CD4-positive, alpha-beta memory T cell (primary cell): ENCODE measurements at regions of chr12 and their contacts with region 1.

Region 1: DNA sequence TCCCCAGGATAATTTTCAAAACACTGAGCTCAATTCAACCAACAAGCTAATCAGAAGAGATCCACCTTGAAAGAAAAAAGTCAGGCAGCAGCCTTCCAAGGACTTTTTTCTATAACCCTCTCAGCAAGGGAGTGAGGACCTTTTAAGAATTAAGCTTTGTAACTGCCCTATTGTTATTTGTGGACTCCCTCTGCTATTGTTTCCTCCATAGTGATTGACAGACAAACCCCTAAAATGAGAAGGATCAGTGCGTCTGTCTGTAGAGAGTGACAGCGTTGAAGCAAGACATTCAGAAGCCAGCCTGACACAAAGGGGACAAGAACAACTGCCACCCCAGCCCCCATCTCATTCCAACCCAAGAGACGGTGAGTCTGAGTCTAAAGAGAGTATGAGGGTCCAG is 30.3 kb upstream of the BTG1 start:
- DNase-seq: no peak
- H3K4me3 ChIP-seq: no peak overlapping the region
- H3K4me3 Mint-ChIP-seq: no peak overlapping the region
- H3K27ac ChIP-seq: no peak overlapping the region
- H3K27ac Mint-ChIP-seq: no peak overlapping the region
- H3K4me1 ChIP-seq: peaks cover 12% of the 10 kb centered on the region
- H3K4me1 Mint-ChIP-seq: peaks cover 1 to 23% (median 15%) of the 10 kb centered on the region in 4 donors
- H3K27me3 ChIP-seq: no peaks in the 10 kb centered on the region
- H3K27me3 Mint-ChIP-seq: no peaks in the 10 kb centered on the region

Region 2: DNA sequence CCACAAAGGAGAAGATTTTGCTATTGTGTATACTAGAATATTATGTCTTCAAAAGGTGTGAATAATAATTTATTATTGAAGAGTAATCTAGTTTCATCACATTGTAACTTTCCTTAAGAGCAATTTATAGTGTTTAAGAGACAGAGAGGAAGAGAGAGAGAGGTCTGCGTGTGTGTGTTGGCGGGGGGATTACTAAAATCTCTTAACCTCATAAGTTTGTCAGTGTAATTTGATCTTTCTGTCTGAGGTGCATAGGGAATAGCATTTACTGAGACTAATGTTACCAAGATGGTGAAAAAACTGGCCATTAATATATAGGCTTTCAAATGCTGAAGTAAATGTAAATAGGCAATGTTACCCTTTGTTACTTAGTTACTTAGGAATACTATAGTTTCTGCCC is 17.9 kb after region 1 on chr12:
- CTCF ChIA-PET with region 1: no interaction called
- POLR2A ChIA-PET with region 1: no interaction called
- intact Hi-C with region 1: loop called (anchors 2 kb)
- DNase-seq: no peak
- H3K4me3 ChIP-seq: no peak overlapping the region
- H3K4me3 Mint-ChIP-seq: no peak overlapping the region
- H3K27ac ChIP-seq: no peak overlapping the region
- H3K27ac Mint-ChIP-seq: no peak overlapping the region
- H3K4me1 ChIP-seq: no peaks in the 10 kb centered on the region
- H3K4me1 Mint-ChIP-seq: peaks cover 1 to 4% (median 3%) of the 10 kb centered on the region in 4 donors
- H3K27me3 ChIP-seq: no peaks in the 10 kb centered on the region
- H3K27me3 Mint-ChIP-seq: no peaks in the 10 kb centered on the region